ENCODE measurements at regions of chr15 and their contacts with region 1.

Region 1: GRCh38 chr15:90201130-90201949 is at the start of gene SEMA4B:
- DNase-seq: peak; percentile 87
- H3K4me3 Mint-ChIP-seq: peak within 1 kb of the TSS; percentile 83
- H3K27ac Mint-ChIP-seq: peak within 1 kb of the TSS; percentile 64
- H3K4me1 Mint-ChIP-seq: peaks cover 26% of the 10 kb centered on the region
- H3K27me3 Mint-ChIP-seq: peaks cover 22% of the 10 kb centered on the region

Region 2: GRCh38 chr15:90214553-90215196 is 13.3 kb after region 1 on chr15:
- CTCF ChIA-PET with region 1: interaction called, 17 read pairs
- DNase-seq: no peak
- H3K4me3 Mint-ChIP-seq: no peak overlapping the region
- H3K27ac Mint-ChIP-seq: no peak overlapping the region
- H3K4me1 Mint-ChIP-seq: peaks cover 39% of the 10 kb centered on the region
- H3K27me3 Mint-ChIP-seq: no peaks in the 10 kb centered on the region

Region 3: DNA sequence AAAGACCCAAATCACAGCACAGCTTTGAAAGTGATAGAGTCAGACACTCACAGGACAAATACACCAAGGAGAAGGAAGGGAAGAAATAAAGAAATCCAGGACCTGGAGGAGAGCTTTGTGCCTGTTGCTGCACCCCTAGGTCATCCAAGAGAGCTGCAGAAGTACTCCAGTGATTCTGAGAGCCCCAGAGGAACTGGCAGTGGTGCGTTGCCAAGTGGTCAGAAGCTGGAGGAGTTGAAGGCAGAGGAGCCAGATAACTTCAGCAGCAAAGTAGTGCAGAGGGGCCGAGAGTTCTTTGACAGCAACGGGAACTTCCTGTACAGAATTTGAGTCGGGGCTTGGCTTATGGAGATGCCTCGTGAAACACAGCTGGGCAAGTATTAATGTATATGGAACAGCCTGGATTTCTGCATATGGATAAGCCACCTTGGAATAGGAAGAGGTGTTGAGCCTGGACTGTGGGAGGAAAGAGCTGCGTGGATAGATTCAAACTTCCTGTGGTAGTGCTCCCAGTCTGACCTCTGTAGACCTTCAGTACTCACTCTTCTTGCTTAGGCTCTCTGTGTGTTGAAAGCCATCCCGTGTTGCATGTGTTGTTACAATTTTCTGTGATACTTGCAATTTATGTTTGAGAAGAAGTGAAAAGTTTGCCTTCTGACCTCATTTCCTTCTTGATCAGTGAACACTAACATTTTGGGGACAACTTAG is 70.3 kb after region 1 on chr15:
- CTCF ChIA-PET with region 1: no interaction called
- DNase-seq: no peak
- H3K4me3 Mint-ChIP-seq: no peak overlapping the region
- H3K27ac Mint-ChIP-seq: no peak overlapping the region
- H3K4me1 Mint-ChIP-seq: peaks cover 47% of the 10 kb centered on the region
- H3K27me3 Mint-ChIP-seq: no peaks in the 10 kb centered on the region

Measured in activated naive CD4-positive, alpha-beta T cell treated with anti-CD3 and anti-CD28 coated beads, Interleukin-2, amount 10 ng/mL, durations not matched to agents 7 days and 5 days (primary cell).